ENCODE measurements at regions of chr20 and their contacts with region 1.

Region 1: DNA sequence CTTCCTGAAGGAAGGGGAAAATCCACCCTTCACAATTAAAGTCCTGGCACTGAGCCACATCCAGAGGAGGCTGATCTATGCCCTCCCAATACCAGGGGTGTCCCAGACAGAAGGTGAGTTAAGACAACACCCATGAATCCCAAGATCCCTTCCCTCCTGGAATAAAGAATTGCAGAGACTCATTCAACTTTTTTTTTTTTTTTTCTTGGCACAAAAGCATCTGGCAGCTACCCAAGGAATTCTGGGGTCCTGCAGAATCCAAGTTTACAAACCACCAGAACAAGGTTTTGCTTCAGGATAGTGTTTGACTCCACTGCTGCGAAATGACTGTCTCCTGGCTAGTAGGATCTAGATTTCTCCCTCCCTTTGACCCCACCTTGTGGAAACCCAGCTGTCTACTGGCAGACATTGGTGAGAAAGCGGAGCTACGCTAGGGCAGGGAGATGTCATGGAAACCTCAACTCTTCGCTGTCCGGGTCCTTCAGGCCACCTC is 37.4 kb downstream of the JAG1 start:
- DNase-seq: peak; percentile 35
- ATAC-seq: peak; percentile 19
- H3K4me3 ChIP-seq: no peak overlapping the region
- H3K27ac ChIP-seq: no peak overlapping the region
- H3K4me1 ChIP-seq: no peaks in the 10 kb centered on the region
- H3K27me3 ChIP-seq: no peaks in the 10 kb centered on the region
- CTCF ChIP-seq: 0 out of 2 replicates have a peak, but pooled peaks have one; percentile 27
- EP300 ChIP-seq: no peak
- POLR2A ChIP-seq: no peak
- RAD21 ChIP-seq: no peak

Region 2: DNA sequence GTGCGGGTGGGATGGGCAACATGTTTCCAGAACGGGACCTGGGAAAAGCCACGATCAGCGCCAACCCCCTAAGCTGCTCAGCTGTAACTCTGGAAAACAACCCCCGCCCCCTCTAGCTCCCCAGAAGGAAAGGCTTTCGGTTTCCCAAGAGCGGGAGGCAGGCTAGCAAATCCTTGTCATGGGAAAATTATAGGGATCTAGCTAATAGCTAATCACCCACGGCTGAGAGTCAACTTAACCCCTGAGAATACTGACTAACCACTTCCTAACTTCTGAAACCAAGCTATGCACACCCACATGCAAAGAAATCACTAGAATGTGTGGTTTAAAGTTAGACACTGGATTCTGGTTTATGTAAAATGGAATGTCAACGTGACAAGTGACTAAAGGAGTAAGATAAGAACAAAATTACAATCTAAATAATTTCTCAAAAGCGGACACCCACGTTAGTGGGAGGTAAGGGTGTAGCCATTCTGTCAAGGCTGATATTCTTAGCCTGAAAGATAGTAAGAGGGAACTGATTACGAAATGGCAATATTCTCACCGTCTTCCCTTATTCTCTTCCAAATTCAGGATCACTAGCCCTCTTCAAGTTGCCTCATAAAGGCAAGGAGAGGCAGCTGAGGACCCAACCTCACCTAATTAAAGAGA is 17.4 kb after region 1 on chr20:
- CTCF ChIA-PET with region 1: no interaction called
- POLR2A ChIA-PET with region 1: no interaction called
- in situ Hi-C with region 1: no loop called
- intact Hi-C with region 1: loop called (anchors 2 kb)
- DNase-seq: no peak
- ATAC-seq: no peak
- H3K4me3 ChIP-seq: no peak overlapping the region
- H3K27ac ChIP-seq: peak overlapping the region; percentile 69
- H3K4me1 ChIP-seq: peaks cover 40% of the 10 kb centered on the region
- H3K27me3 ChIP-seq: no peaks in the 10 kb centered on the region
- CTCF ChIP-seq: no peak
- EP300 ChIP-seq: no peak
- POLR2A ChIP-seq: no peak
- RAD21 ChIP-seq: no peak